HEK293T (cell line): ENCODE measurements at regions of chr4 and their contacts with region 1.

Region 1: GRCh38 chr4:123649645-123650391 is 253.2 kb downstream of the SPRY1 start:
- DNase-seq: peak; percentile 42

Region 2: GRCh38 chr4:123421227-123421936 is 228.4 kb before region 1 on chr4:
- CTCF ChIA-PET with region 1: no interaction called
- POLR2A ChIA-PET with region 1: no interaction called
- DNase-seq: no peak

Region 3: DNA sequence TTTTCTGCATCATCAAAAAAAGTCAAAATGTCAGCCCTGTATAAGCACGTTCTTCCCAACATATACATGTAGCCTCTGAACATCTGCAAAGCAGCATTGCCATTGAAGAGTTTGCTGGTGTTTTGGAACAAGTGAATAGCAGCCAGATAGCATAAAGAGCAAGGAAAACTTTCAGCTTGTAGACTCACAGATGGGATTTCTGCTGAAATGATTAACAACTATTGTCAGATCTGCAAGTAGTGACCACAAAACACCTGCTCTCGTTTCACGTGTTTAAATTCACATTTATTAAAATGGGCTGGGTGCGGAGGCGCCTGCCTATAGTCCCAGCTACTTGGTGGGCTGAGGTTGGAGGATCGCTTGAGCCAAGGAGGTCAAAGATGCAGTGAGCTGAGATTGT is 129.5 kb before region 1 on chr4:
- CTCF ChIA-PET with region 1: no interaction called
- POLR2A ChIA-PET with region 1: no interaction called
- DNase-seq: no peak

Region 4: GRCh38 chr4:123564758-123565346 is 85.0 kb before region 1 on chr4:
- CTCF ChIA-PET with region 1: interaction called, 13 read pairs
- POLR2A ChIA-PET with region 1: no interaction called
- DNase-seq: peak; percentile 81

Region 5: DNA sequence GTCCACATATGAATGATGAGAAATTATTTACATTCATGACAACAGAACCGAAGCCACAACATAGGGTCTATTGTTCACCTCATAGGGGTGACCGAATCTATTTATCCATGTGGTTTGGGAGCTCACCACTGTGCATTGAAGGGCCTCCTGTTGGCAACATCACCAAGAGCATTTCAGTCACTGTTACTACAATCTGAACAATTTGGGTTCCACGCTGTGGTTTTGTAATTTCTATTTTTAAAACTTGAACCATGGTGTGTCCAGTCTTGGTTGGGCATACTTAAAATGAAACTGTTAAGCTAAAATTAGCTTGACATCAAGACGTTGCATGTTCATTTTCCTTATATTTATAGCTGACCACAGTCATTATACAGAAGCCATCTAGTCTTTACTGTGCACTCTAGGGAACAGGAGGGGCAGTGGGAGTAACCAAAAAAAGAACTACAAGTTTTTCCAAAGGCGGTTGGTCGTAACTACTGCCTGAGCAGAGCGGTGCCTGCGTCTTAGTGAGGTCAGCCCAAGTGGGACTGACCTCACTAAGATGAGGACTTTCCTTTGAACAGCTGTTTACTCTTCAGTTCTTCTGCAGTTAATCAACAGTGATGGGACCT is 61.1 kb before region 1 on chr4:
- CTCF ChIA-PET with region 1: no interaction called
- POLR2A ChIA-PET with region 1: interaction called, 10 read pairs
- DNase-seq: peak; percentile 20

Region 6: GRCh38 chr4:123699880-123700771 is 50.3 kb after region 1 on chr4:
- CTCF ChIA-PET with region 1: no interaction called
- POLR2A ChIA-PET with region 1: no interaction called
- DNase-seq: no peak